ENCODE measurements at regions of chr15 and their contacts with region 1.

Region 1: DNA sequence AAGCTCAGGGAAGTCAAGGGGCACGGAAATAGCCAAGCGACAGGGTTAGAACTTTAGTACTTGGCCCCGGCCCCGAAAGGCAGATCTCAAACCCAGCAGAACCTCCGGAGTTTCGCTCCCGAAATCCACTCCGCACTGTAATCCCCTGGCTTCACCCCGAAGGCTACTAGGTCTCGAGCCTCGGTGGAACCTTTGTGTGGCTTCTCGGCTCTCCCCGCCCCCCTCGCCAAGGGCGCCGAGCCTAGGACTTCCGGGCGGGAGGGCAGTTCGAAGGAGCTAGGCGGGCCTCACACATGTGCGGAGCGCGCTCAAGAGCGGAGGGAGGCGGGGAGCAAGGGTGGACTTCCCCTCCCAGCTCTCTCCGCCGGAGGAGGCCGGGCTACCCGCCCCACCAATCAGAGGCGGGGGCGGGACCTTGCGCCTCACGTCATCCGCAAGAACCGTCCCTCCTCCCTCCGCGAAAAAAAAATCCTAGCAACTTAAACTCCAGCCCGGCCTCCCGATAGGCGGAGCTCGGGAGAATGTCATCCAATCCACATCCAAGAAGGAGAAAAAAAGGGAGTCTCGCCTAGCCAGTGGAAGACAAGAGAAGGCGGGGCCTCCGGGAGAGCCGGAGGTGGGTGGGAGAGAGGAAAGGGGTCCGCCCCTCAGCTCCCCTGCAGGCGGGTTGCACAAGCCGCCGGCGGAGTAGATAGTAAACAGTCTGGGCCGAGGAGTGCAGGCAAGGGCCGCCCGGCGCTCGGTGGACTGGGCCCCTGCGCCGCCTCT is 2.4 kb upstream of the SIN3A start:
- DNase-seq: peak; percentile 98
- H3K4me3 Mint-ChIP-seq: peak overlapping the region; percentile 97
- H3K27ac Mint-ChIP-seq: peak overlapping the region; percentile 99
- H3K4me1 Mint-ChIP-seq: peaks cover 24% of the 10 kb centered on the region
- H3K27me3 Mint-ChIP-seq: no peaks in the 10 kb centered on the region

Region 2: GRCh38 chr15:74781431-74782258 is 672.2 kb before region 1 on chr15 and contains the start of gene CSK:
- CTCF ChIA-PET with region 1: interaction called, 3 read pairs
- POLR2A ChIA-PET with region 1: no interaction called
- intact Hi-C with region 1: loop called (anchors 2 kb)
- DNase-seq: peak; percentile 83
- H3K4me3 Mint-ChIP-seq: peak within 1 kb of the TSS; percentile 90
- H3K27ac Mint-ChIP-seq: peak within 1 kb of the TSS; percentile 99
- H3K4me1 Mint-ChIP-seq: peaks cover 50% of the 10 kb centered on the region
- H3K27me3 Mint-ChIP-seq: no peaks in the 10 kb centered on the region
- total RNA-seq, gene CSK: 260 to 262 TPM

Region 3: GRCh38 chr15:74956648-74957300 is 497.1 kb before region 1 on chr15 and contains the start of gene RPP25:
- CTCF ChIA-PET with region 1: no interaction called
- POLR2A ChIA-PET with region 1: no interaction called
- intact Hi-C with region 1: loop called (anchors 5 kb)
- DNase-seq: peak; percentile 80
- H3K4me3 Mint-ChIP-seq: peak within 1 kb of the TSS; percentile 63
- H3K27ac Mint-ChIP-seq: no peak within 1 kb of the TSS
- H3K4me1 Mint-ChIP-seq: peaks cover 50% of the 10 kb centered on the region
- H3K27me3 Mint-ChIP-seq: peaks cover 21% of the 10 kb centered on the region
- total RNA-seq, gene RPP25: 3.8 TPM

Region 4: GRCh38 chr15:75407083-75407482 is 46.8 kb before region 1 on chr15:
- CTCF ChIA-PET with region 1: interaction called, 5 read pairs
- POLR2A ChIA-PET with region 1: interaction called, 5 read pairs
- intact Hi-C with region 1: loop called (anchors 2 kb)
- DNase-seq: no peak
- H3K4me3 Mint-ChIP-seq: no peak overlapping the region
- H3K27ac Mint-ChIP-seq: peak overlapping the region; percentile 65
- H3K4me1 Mint-ChIP-seq: peaks cover 55% of the 10 kb centered on the region
- H3K27me3 Mint-ChIP-seq: no peaks in the 10 kb centered on the region

Region 5: GRCh38 chr15:75639709-75640482 is 186.0 kb after region 1 on chr15 and contains the start of gene IMP3:
- CTCF ChIA-PET with region 1: interaction called, 20 read pairs
- POLR2A ChIA-PET with region 1: interaction called, 42 read pairs
- intact Hi-C with region 1: loop called (anchors 1 kb)
- DNase-seq: peak; percentile 98
- H3K4me3 Mint-ChIP-seq: peak within 1 kb of the TSS; percentile 86
- H3K27ac Mint-ChIP-seq: peak within 1 kb of the TSS; percentile 86
- H3K4me1 Mint-ChIP-seq: peaks cover 27% of the 10 kb centered on the region
- H3K27me3 Mint-ChIP-seq: no peaks in the 10 kb centered on the region
- total RNA-seq, gene IMP3: 71.7 to 72.4 TPM